Endothelial cell of umbilical vein (primary cell): ENCODE measurements at regions of chr2 and their contacts with region 1.

Region 1: DNA sequence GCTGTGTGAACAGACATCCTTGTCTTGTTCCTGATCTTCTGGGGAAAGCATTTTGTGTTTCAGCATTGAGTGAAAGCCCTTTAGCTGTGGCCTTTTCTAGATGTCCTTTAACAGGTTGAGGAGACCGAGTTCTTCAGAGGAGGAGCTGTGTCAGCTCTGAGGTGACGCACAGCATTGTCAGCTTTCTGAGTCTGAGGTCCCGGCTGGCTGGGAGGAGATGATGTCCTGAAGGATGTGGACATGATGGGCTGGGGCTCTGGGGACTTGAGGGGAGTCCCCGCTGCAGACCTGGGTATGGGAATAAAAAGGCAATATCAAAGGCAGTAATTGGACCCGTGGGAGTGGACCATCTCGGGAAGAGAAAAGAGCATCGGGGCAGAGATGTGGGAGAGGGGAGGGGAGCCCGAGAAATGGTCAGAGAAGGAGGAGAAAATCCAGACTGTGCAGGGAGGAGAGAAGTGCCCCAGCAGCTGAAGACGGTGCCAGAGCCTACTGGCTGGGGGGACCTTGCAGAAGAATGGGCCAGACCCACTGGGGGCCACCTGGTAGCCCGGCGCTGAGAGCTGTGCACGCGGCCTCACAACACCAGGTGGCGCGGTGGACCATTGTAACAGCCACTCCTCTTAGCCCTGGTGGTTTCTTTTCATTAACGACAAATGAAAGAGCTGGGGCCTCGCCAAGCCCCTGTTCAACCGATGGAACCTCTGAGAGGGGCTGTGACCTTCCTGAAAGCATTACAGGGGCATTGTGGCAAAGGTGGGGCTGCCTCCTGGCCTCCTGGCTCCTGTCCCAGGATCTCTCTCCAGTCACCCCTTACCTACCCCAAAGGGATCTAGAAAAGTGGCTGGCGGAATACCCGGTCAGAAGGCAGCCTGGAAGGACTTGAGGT is 61.6 kb downstream of the ST3GAL5 start:
- DNase-seq: peak; percentile 61
- H3K4me3 ChIP-seq: no peak overlapping the region
- H3K27ac ChIP-seq: no peak overlapping the region
- H3K4me1 ChIP-seq: no peaks in the 10 kb centered on the region
- H3K27me3 ChIP-seq: peaks cover 0 to 2% of the 10 kb centered on the region in 2 experiments
- CTCF ChIP-seq: peak; percentile 71 to 92
- POLR2A ChIP-seq: no peak

Region 2: DNA sequence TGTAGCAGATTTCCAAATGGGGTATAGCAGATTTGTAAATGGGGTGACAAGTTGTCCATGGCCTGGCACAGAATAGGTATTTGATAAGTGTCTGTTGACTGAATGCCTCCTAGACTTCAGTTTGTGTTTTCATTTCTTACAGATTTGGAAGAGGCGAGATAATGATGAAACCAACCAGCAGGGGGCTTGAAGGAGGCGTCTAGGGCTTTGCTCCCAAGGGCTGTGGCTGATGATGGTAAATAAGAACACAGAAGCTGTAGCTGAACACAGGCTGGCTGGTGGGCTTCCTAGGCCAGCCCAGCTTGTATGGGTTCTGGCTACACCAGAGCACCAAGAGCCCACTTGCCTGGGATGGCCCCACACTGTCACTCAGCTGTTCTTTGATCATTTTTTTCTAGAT is 178.6 kb before region 1 on chr2:
- CTCF ChIA-PET with region 1: interaction called, 10 read pairs
- POLR2A ChIA-PET with region 1: no interaction called
- dilution Hi-C with region 1: no loop called
- intact Hi-C with region 1: no loop called
- DNase-seq: peak; percentile 66
- H3K4me3 ChIP-seq: no peak overlapping the region
- H3K27ac ChIP-seq: peak overlapping the region; percentile 42
- H3K4me1 ChIP-seq: peaks cover 16% of the 10 kb centered on the region
- H3K27me3 ChIP-seq: no peaks in the 10 kb centered on the region
- CTCF ChIP-seq: peak; percentile 65 to 72
- POLR2A ChIP-seq: no peak

Region 3: GRCh38 chr2:85838181-85838580 is 10.9 kb after region 1 on chr2:
- CTCF ChIA-PET with region 1: interaction called, 23 read pairs
- POLR2A ChIA-PET with region 1: no interaction called
- dilution Hi-C with region 1: no loop called
- intact Hi-C with region 1: no loop called
- DNase-seq: no peak
- H3K4me3 ChIP-seq: no peak overlapping the region
- H3K27ac ChIP-seq: no peak overlapping the region
- H3K4me1 ChIP-seq: no peaks in the 10 kb centered on the region
- H3K27me3 ChIP-seq: no peaks in the 10 kb centered on the region
- CTCF ChIP-seq: no peak
- POLR2A ChIP-seq: no peak

Region 4: DNA sequence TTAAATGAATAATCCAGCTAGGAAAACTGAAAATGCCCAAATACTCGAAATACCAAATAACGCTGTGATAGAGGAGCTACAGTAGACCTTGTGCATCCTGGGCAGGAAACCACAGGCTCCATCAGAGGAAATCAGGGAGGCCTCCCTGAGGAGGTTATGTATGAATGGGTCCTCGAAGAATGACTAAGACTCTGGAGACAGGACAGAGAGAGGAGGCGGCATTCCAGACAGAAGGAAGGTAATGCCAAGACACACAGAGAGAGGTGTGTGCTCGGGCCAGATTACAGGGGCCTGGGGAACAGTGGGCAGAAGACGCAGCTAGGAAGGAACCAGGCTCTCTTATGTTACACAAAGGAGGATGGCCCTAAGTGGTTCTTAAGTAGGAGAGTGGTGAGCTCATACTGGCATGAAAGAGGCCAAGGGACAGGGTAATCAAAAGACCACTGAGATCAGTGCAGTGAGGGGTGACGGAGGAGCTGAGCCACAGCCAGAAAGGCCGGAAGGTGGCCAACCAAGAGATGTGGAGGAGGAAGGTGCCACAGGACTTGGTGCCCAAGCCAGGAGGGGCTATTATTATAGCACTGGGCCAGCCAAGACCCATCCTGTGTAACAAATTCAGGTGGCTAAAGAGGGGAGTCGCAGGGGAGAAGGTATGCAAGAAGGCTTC is 51.6 kb after region 1 on chr2:
- CTCF ChIA-PET with region 1: interaction called, 29 read pairs
- POLR2A ChIA-PET with region 1: interaction called, 4 read pairs
- dilution Hi-C with region 1: no loop called
- intact Hi-C with region 1: no loop called
- DNase-seq: peak; percentile 58
- H3K4me3 ChIP-seq: no peak overlapping the region
- H3K27ac ChIP-seq: peak overlapping the region; percentile 8
- H3K4me1 ChIP-seq: peaks cover 12% of the 10 kb centered on the region
- H3K27me3 ChIP-seq: no peaks in the 10 kb centered on the region
- CTCF ChIP-seq: no peak
- POLR2A ChIP-seq: no peak

Region 5: DNA sequence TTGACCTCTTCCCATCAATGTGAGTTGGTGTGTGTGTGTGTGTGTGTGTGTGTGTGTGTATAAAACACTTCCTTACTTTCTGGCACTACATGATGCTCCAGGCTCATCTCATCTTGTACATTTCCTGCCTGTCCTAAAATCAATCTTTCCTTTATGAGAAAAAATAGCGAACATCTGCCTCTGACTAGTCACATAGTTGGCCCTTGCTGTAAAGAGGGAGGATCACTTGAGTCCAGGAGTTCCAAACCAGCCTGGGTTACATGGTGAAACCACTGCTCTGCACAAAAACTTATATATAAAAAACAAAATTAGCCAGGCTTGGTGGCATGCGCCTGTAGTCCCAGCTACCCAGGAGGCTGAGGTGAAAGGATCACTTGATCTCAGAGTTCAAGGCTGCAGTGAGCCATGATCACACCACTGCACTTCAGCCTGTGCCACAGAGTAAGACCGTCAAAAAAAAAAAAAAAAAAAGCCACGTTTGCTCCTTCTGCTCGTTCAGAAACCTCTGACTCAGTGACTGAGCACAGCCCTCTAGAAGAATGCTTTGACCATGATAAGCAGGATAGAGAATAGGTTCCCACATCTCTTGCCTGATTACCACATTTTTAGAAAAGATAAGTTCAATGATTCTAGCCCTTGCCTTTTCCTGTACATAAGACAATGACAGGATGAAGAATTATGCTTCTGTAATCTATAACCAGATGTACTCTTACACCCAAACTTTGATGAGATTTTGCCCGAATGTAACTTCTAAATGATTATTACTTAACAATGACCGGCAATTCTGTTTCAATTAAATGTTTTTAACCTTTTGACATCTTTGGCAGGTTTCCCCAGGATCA is 106.7 kb after region 1 on chr2:
- CTCF ChIA-PET with region 1: interaction called, 10 read pairs
- POLR2A ChIA-PET with region 1: no interaction called
- dilution Hi-C with region 1: no loop called
- intact Hi-C with region 1: no loop called
- DNase-seq: peak; percentile 79
- H3K4me3 ChIP-seq: no peak overlapping the region
- H3K27ac ChIP-seq: no peak overlapping the region
- H3K4me1 ChIP-seq: peaks cover 36% of the 10 kb centered on the region
- H3K27me3 ChIP-seq: no peaks in the 10 kb centered on the region
- CTCF ChIP-seq: no peak
- POLR2A ChIP-seq: no peak

Region 6: GRCh38 chr2:86035883-86036668 is 208.8 kb after region 1 on chr2:
- CTCF ChIA-PET with region 1: interaction called, 95 read pairs
- POLR2A ChIA-PET with region 1: no interaction called
- dilution Hi-C with region 1: no loop called
- intact Hi-C with region 1: loop called (anchors 1 kb)
- DNase-seq: peak; percentile 94
- H3K4me3 ChIP-seq: no peak overlapping the region
- H3K27ac ChIP-seq: peak overlapping the region; percentile 96
- H3K4me1 ChIP-seq: peaks cover 43% of the 10 kb centered on the region
- H3K27me3 ChIP-seq: no peaks in the 10 kb centered on the region
- CTCF ChIP-seq: peak in 1 of 2 donors; percentile 30
- POLR2A ChIP-seq: no peak

Region 7: GRCh38 chr2:86079981-86080911 is 253.0 kb after region 1 on chr2:
- CTCF ChIA-PET with region 1: interaction called, 541 read pairs
- POLR2A ChIA-PET with region 1: interaction called, 6 read pairs
- dilution Hi-C with region 1: no loop called
- intact Hi-C with region 1: loop called (anchors 1 kb)
- DNase-seq: peak; percentile 58
- H3K4me3 ChIP-seq: no peak overlapping the region
- H3K27ac ChIP-seq: peak overlapping the region; percentile 9
- H3K4me1 ChIP-seq: peaks cover 3% of the 10 kb centered on the region
- H3K27me3 ChIP-seq: no peaks in the 10 kb centered on the region
- CTCF ChIP-seq: peak; percentile 84 to 91
- POLR2A ChIP-seq: no peak